MCF 10A (cell line): ENCODE measurements at regions of chr9 and their contacts with region 1.

Region 1: GRCh38 chr9:132169672-132170392 is 8.0 kb downstream of the NTNG2 start:
- DNase-seq: peak; percentile 60
- H3K4me3 Mint-ChIP-seq: no peak overlapping the region
- H3K27ac Mint-ChIP-seq: no peak overlapping the region
- H3K4me1 Mint-ChIP-seq: no peaks in the 10 kb centered on the region
- H3K27me3 Mint-ChIP-seq: peaks cover 91% of the 10 kb centered on the region
- CTCF ChIP-seq: peak; percentile 90

Region 2: GRCh38 chr9:132079391-132080091 is 90.3 kb before region 1 on chr9 and contains the start of gene MED27:
- CTCF ChIA-PET with region 1: no interaction called
- POLR2A ChIA-PET with region 1: interaction called, 3 read pairs
- intact Hi-C with region 1: loop called (anchors 10 kb)
- DNase-seq: peak; percentile 88
- H3K4me3 Mint-ChIP-seq: peak within 1 kb of the TSS; percentile 97
- H3K27ac Mint-ChIP-seq: peak within 1 kb of the TSS; percentile 90
- H3K4me1 Mint-ChIP-seq: peaks cover 26% of the 10 kb centered on the region
- H3K27me3 Mint-ChIP-seq: peaks cover 2% of the 10 kb centered on the region
- CTCF ChIP-seq: no peak
- total RNA-seq, gene MED27: 34.3 and 41.9 TPM in 2 replicates

Region 3: GRCh38 chr9:132156262-132156661 is 13.6 kb before region 1 on chr9:
- CTCF ChIA-PET with region 1: interaction called, 11 read pairs
- POLR2A ChIA-PET with region 1: no interaction called
- intact Hi-C with region 1: no loop called
- DNase-seq: no peak
- H3K4me3 Mint-ChIP-seq: no peak overlapping the region
- H3K27ac Mint-ChIP-seq: no peak overlapping the region
- H3K4me1 Mint-ChIP-seq: no peaks in the 10 kb centered on the region
- H3K27me3 Mint-ChIP-seq: peaks cover 72% of the 10 kb centered on the region
- CTCF ChIP-seq: no peak